ENCODE measurements at regions of chr16 and their contacts with region 1.

Region 1: DNA sequence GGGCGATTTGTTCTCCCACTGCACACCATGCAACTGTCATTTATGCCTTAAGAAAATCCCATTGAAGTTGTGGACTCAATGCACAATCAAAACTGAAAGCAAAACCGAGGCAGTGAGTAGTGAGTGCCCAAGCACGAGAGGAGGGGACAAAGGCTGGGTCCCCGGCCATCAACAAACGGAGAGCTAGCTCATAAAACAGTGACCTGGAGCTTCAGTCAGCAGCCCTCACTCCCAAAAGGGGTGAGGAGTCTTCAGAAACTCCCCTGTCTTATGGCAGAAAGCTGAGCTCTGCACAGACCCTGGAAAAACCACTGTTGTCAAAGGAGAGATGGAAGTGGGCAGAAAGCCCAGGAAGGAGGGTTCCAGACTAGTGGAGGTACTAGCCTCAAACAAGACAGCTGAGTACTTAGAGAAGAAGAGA is 96.9 kb downstream of the ADCY9 start:
- DNase-seq: no peak
- H3K4me3 ChIP-seq: no peak overlapping the region
- H3K4me3 Mint-ChIP-seq: no peak overlapping the region
- H3K27ac Mint-ChIP-seq: peak overlapping the region; percentile 51
- H3K4me1 ChIP-seq: peaks cover 34% of the 10 kb centered on the region
- H3K4me1 Mint-ChIP-seq: peaks cover 33% of the 10 kb centered on the region
- H3K27me3 ChIP-seq: no peaks in the 10 kb centered on the region
- H3K27me3 Mint-ChIP-seq: no peaks in the 10 kb centered on the region
- CTCF ChIP-seq: no peak

Region 2: DNA sequence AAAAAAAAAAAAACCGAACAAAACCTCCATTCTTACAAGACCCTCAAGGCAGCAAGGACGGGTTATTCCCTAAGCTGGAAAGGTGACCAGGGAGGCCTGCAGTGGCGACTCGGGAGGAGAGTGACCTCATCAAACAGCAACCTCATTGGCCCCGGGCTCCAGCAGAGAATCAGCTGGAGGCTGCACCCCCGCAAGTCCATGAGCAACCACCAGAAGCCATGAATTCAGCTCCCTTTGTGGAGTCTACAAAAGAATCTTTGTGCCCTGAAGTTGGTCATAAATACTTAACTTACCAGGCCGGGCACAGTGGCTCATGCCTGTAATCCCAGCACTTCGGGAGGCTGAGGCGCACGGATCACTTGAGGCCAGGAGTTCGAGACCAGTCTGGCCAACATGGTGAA is 57.9 kb before region 1 on chr16:
- CTCF ChIA-PET with region 1: no interaction called
- POLR2A ChIA-PET with region 1: no interaction called
- intact Hi-C with region 1: no loop called
- DNase-seq: no peak
- H3K4me3 ChIP-seq: no peak overlapping the region
- H3K4me3 Mint-ChIP-seq: peak overlapping the region; percentile 66
- H3K27ac Mint-ChIP-seq: no peak overlapping the region
- H3K4me1 ChIP-seq: peaks cover 4% of the 10 kb centered on the region; the same call in 1 of the 2 replicates
- H3K4me1 Mint-ChIP-seq: peaks cover 6% of the 10 kb centered on the region
- H3K27me3 ChIP-seq: no peaks in the 10 kb centered on the region
- H3K27me3 Mint-ChIP-seq: no peaks in the 10 kb centered on the region
- CTCF ChIP-seq: no peak

Region 3: DNA sequence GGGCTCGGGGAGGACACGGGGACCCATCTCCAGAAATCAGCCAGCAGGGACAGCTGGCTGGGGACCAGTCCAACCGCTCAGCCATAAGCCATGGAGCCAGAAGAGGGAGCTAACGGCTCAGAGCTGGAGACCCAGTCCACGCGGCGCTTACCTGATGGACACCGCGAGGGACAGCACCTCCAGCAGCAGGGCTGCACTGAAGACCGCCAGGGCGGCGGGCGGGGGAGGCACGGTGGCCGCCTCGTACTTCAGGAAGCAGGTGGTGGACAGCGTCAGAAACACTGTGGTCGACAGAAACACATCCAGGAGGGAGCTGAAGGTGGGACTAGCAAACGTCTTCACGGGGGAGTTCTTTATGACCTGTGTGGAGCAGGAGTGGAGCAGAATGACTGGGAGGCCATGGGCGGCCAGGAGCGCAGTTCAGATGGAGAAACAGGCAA is 36.3 kb before region 1 on chr16:
- CTCF ChIA-PET with region 1: interaction called, 3 read pairs
- POLR2A ChIA-PET with region 1: no interaction called
- intact Hi-C with region 1: loop called (anchors 2 kb)
- DNase-seq: peak; percentile 70 to 78
- H3K4me3 ChIP-seq: no peak overlapping the region
- H3K4me3 Mint-ChIP-seq: no peak overlapping the region
- H3K27ac Mint-ChIP-seq: no peak overlapping the region
- H3K4me1 ChIP-seq: peaks cover 5% of the 10 kb centered on the region; the same call in 1 of the 2 replicates
- H3K4me1 Mint-ChIP-seq: no peaks in the 10 kb centered on the region
- H3K27me3 ChIP-seq: no peaks in the 10 kb centered on the region
- H3K27me3 Mint-ChIP-seq: no peaks in the 10 kb centered on the region
- CTCF ChIP-seq: peak; percentile 58 to 78

Region 4: DNA sequence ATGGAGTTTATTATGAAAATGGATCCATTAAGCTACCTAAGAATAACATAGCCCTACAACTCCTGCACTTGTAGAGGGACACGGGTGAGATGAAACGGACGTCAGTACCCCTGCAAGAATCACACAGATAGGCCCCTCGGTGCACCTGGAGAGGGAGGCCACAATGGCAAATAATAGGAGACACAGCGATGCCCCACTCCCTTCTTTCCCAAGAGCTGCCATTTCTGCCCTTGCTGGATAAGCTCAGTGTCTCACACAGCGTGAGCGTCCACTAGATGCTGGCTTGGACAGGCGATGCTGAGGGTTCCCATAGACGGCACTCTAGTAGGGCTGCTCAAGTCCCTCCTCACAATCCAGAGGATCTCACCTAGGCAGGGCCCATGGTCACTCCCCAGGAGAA is 29.1 kb after region 1 on chr16:
- CTCF ChIA-PET with region 1: no interaction called
- POLR2A ChIA-PET with region 1: no interaction called
- intact Hi-C with region 1: loop called (anchors 1 kb)
- DNase-seq: no peak
- H3K4me3 ChIP-seq: no peak overlapping the region
- H3K4me3 Mint-ChIP-seq: no peak overlapping the region
- H3K27ac Mint-ChIP-seq: no peak overlapping the region
- H3K4me1 ChIP-seq: 0 out of 2 replicates have a peak, but pooled peaks cover 4% of the 10 kb centered on the region
- H3K4me1 Mint-ChIP-seq: peaks cover 7% of the 10 kb centered on the region
- H3K27me3 ChIP-seq: no peaks in the 10 kb centered on the region
- H3K27me3 Mint-ChIP-seq: no peaks in the 10 kb centered on the region
- CTCF ChIP-seq: no peak

Region 5: DNA sequence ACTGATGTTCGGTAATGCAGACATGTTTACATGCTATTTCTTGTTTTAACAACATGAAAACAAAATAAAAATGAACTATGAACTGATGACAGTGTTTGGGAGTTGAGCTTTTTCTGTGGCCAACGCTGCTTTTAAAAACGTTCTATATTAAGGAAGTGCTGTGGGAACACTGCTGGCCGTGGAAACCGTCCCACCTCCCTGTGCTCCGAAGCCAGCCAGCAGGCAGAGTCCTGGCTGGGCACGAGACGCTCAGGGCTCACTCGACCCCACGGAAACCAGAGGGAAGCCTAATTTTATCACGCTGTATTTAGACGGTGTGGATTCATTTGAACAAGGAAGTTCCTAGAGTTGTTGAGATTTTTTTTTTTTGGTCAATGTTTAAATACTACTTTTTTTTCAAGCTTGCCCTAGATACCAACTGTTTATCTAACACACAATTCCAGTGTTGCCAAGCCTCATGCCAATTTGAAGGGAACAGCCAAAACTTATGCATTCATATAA is 71.0 kb after region 1 on chr16:
- CTCF ChIA-PET with region 1: no interaction called
- POLR2A ChIA-PET with region 1: interaction called, 8 read pairs
- intact Hi-C with region 1: loop called (anchors 10 kb)
- DNase-seq: no peak
- H3K4me3 ChIP-seq: no peak overlapping the region
- H3K4me3 Mint-ChIP-seq: no peak overlapping the region
- H3K27ac Mint-ChIP-seq: no peak overlapping the region
- H3K4me1 ChIP-seq: peaks cover 19% of the 10 kb centered on the region
- H3K4me1 Mint-ChIP-seq: peaks cover 23% of the 10 kb centered on the region
- H3K27me3 ChIP-seq: no peaks in the 10 kb centered on the region
- H3K27me3 Mint-ChIP-seq: no peaks in the 10 kb centered on the region
- CTCF ChIP-seq: no peak

Region 6: DNA sequence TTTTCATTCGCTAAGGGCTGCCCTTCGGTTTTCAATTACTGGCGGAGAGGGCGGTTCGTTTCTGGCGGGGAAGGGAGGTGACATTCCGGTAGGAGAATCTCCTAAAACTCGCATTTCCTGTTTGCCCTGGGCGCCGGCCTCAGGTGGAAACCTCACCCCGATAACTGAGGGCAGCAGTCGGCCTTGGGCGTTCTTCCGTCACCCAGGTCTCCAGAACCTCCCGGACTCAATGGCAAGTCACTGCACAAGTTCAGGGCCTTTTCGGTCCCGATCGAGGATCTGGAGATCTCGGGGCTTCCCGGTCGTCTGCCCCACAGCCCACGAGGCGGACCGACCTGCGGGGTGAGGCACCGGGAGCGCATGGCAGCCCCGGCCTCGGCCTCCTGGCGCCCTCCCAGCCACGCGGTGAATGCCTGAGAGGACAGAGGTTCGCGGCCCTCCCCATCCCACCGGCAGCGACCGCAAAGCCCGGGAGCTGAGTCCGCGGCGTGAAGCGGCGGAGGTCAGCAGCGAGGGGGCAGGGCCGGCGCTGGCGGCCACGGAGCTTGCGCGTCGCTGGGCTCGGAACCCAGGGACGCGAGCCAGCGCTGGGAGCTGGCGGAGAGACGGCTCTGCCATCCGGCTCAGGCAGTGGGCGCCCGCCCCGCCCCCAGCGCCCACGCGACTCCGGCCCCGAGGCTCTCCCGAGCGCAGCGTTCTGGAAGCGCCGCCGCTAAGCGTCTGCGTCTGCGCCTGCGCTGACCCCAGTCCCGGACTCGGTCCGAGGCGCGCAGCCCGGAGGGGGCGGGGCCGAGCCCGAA is 164.1 kb after region 1 on chr16:
- CTCF ChIA-PET with region 1: no interaction called
- POLR2A ChIA-PET with region 1: no interaction called
- intact Hi-C with region 1: loop called (anchors 10 kb)
- DNase-seq: peak; percentile 89 to 97
- H3K4me3 ChIP-seq: peak overlapping the region; percentile 78
- H3K4me3 Mint-ChIP-seq: peak overlapping the region; percentile 68
- H3K27ac Mint-ChIP-seq: peak overlapping the region; percentile 71
- H3K4me1 ChIP-seq: 0 out of 2 replicates have a peak, but pooled peaks cover 4% of the 10 kb centered on the region
- H3K4me1 Mint-ChIP-seq: peaks cover 14% of the 10 kb centered on the region
- H3K27me3 ChIP-seq: no peaks in the 10 kb centered on the region
- H3K27me3 Mint-ChIP-seq: no peaks in the 10 kb centered on the region
- CTCF ChIP-seq: no peak